B cell (primary cell): ENCODE measurements at regions of chr1 and their contacts with region 1.

Region 1: GRCh38 chr1:92291372-92291999 is 7.3 kb downstream of the GLMN start:
- DNase-seq: peak; percentile 20
- ATAC-seq: no peak
- H3K4me3 ChIP-seq: no peak overlapping the region
- H3K4me3 Mint-ChIP-seq: no peak overlapping the region
- H3K27ac ChIP-seq: no peak overlapping the region
- H3K27ac Mint-ChIP-seq: no peak overlapping the region
- H3K4me1 ChIP-seq: no peaks in the 10 kb centered on the region
- H3K4me1 Mint-ChIP-seq: peaks cover 4% of the 10 kb centered on the region
- H3K27me3 ChIP-seq: no peaks in the 10 kb centered on the region
- H3K27me3 Mint-ChIP-seq: no peaks in the 10 kb centered on the region
- CTCF ChIP-seq: peak; percentile 52

Region 2: DNA sequence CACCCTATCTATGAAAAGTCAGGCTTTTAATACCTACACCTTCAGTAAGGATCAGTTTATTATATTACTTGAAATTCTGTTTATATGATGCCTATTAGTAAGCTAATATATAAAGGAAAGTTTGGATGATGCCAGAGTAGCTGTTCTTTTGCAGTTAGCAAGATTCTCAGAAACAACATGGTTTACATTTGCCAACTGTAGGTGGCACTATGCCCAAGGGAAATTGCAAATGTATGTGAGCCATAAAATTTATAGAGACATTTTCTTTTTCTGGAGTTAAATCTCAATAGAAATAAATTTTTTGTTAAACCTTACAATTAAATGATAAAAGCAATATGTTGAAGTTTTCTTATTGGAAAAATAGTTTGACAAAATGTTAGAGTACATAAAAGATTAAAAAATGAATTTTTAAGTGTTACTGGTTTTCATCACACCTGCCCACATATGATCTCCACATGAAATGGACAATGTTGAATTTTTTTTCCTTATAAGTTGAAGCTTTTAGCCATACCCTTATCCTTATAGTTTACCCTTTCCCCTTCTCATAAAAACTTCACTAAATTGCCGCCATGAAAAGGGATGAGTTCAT is 293.8 kb before region 1 on chr1:
- CTCF ChIA-PET with region 1: interaction called, 11 read pairs
- POLR2A ChIA-PET with region 1: no interaction called
- intact Hi-C with region 1: no loop called
- DNase-seq: peak; percentile 42
- ATAC-seq: no peak
- H3K4me3 ChIP-seq: no peak overlapping the region
- H3K4me3 Mint-ChIP-seq: no peak overlapping the region
- H3K27ac ChIP-seq: no peak overlapping the region
- H3K27ac Mint-ChIP-seq: no peak overlapping the region
- H3K4me1 ChIP-seq: no peaks in the 10 kb centered on the region
- H3K4me1 Mint-ChIP-seq: no peaks in the 10 kb centered on the region
- H3K27me3 ChIP-seq: no peaks in the 10 kb centered on the region
- H3K27me3 Mint-ChIP-seq: peaks cover 4% of the 10 kb centered on the region
- CTCF ChIP-seq: peak; percentile 69

Region 3: DNA sequence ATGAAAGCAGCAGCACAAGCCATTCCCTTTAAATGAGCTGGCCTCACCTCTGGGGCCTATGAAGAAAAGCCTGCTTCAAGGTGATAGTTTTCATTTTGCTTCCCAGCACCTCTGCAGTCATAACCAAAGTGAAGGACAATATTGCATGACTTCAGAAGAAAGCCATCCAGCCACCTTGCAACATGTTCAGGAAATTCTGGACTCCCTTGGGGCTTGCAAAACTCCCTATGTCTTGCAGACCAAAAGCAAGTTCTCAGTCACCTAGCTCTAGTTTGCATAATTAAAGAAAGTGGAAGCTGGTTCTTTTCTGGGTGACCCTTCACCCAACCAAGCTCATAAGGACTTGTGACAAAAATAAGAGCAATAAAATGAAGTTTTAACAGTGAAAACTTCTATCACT is 107.6 kb after region 1 on chr1:
- CTCF ChIA-PET with region 1: no interaction called
- POLR2A ChIA-PET with region 1: no interaction called
- intact Hi-C with region 1: no loop called
- DNase-seq: peak; percentile 31
- ATAC-seq: peak; percentile 51
- H3K4me3 ChIP-seq: no peak overlapping the region
- H3K4me3 Mint-ChIP-seq: no peak overlapping the region
- H3K27ac ChIP-seq: no peak overlapping the region
- H3K27ac Mint-ChIP-seq: no peak overlapping the region
- H3K4me1 ChIP-seq: peaks cover 0 to 7% of the 10 kb centered on the region in 2 donors
- H3K4me1 Mint-ChIP-seq: peaks cover 15% of the 10 kb centered on the region
- H3K27me3 ChIP-seq: no peaks in the 10 kb centered on the region
- H3K27me3 Mint-ChIP-seq: no peaks in the 10 kb centered on the region
- CTCF ChIP-seq: no peak

Region 4: DNA sequence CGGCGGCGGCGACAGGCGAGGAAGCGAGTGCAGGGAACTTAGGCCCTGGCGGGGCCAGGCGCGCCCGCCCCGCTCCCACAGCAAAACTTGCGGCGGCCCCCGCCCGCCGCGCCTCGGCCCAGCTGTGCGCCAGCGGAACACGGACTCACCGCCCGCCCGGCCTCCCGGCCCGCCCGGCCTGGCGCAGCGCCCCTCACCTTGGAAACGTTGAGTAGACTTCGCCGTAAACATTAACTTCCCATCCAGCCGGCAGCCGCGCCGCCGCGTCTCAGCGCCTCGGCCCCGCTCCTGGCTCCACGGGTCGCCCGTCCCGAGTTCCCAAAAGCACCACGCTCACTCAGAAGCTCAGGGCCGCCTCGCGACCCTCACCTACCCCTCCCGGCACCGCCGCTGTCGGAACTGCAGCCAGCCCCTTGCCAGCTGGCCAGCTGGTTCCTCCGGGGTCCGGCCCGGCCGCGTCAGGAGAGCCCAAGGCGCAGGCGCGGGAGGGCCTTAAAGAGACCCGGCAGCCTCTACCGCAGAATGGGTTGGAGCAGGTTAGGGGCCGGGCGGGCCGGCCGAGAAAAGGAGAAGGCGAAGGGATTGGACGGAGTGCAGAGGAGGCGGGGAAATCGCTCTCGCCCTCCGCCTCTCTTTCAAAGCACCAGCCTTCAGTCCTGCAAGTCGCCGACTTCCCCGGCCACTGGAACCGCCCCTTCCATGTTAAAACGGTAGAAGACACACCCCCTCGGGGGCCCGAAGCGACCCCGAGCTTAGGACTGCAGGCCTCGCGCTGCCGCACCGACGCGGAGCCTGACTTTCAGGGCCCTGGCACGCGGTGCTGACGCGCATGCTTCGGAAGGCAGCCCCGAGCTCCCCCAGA is 493.4 kb after region 1 on chr1 and contains the start of gene EVI5:
- CTCF ChIA-PET with region 1: no interaction called
- POLR2A ChIA-PET with region 1: no interaction called
- intact Hi-C with region 1: no loop called
- DNase-seq: peak; percentile 95
- ATAC-seq: peak; percentile 89
- H3K4me3 ChIP-seq: peak within 1 kb of the TSS; percentile 54 to 87 (median 71)
- H3K4me3 Mint-ChIP-seq: peak within 1 kb of the TSS; percentile 94
- H3K27ac ChIP-seq: peak within 1 kb of the TSS; percentile 80 to 94
- H3K27ac Mint-ChIP-seq: peak within 1 kb of the TSS; percentile 95
- H3K4me1 ChIP-seq: peaks cover 7 to 17% of the 10 kb centered on the region in 2 donors
- H3K4me1 Mint-ChIP-seq: peaks cover 26% of the 10 kb centered on the region
- H3K27me3 ChIP-seq: no peaks in the 10 kb centered on the region
- H3K27me3 Mint-ChIP-seq: no peaks in the 10 kb centered on the region
- CTCF ChIP-seq: no peak
- total RNA-seq, gene EVI5: 35.4 and 36.3 TPM in 2 replicates